ENCODE measurements at regions of chr1 and their contacts with region 1.

Region 1: DNA sequence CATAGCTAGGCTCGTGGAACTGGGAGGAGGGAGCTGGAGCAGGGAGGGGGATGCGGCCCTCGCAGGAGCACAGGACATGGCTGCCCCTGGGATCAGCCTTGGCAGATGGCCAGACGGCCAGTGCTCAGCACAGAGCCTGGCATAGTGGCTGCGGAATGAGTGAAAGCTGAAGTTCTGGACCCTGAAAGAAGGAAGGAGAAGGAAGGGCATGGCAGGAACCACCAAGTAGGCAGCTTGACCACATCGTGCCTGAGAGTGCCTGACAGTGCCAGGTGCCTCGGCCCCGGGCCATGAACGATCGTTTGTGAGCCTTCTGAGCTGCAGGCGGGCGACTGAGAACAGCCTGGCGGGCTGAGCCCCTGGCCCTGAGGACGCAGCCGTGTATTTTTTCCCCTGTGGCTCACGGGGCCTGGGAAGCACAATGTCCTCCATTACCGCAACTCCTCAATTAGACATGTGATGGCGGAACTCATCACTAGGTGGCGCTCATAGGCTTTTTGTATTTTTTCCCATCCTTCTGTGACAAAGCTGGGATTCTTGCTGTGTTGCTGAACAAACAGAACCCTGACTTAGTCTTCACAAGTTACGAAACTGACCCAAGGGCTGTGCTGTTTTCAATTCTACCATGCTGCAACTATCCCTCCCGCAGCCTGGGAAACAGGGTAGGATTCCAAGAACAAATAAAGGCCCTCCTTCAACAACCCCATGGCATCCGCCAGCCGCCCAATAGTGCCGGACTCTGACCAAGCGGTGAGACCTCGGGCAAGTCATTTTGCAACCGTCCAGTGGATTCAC is 29.9 kb upstream of the TMEM61 start:
- DNase-seq: peak; percentile 76
- H3K4me3 ChIP-seq: peak overlapping the region in 2 of 8 donors; percentile 15 to 50
- H3K27ac ChIP-seq: peak overlapping the region in 2 of 8 donors; percentile 36 to 47
- H3K4me1 ChIP-seq: peaks cover 0 to 34% (median 8%) of the 10 kb centered on the region in 6 donors
- H3K27me3 ChIP-seq: peaks cover 0 to 7% (median 0%) of the 10 kb centered on the region in 7 donors
- CTCF ChIP-seq: peak; percentile 45 to 86 (median 72)
- POLR2A ChIP-seq: no peak

Region 2: DNA sequence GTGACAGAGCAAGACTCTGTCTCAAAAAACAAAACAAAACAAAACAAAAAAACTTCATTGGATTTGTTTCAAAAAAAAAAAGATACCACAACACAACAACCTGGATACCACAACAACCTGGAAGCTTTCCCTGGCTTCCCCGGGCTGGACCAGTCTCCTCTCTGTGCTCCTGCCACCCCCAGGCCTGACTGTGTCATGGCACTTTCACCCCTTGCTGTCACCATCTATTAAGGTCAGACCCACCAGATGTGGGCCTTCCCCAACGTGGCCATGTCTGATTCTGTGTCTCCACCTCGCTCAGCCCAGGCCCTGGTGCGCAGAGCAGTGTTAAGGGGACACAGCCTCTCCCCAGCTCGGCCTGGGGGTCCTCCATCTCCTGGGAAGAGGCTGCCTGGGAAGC is 430.9 kb before region 1 on chr1:
- intact Hi-C with region 1: no loop called
- DNase-seq: no peak
- H3K4me3 ChIP-seq: no peak overlapping the region
- H3K27ac ChIP-seq: no peak overlapping the region
- H3K4me1 ChIP-seq: no peaks in the 10 kb centered on the region
- H3K27me3 ChIP-seq: peaks cover 0 to 6% (median 0%) of the 10 kb centered on the region in 7 donors
- CTCF ChIP-seq: no peak
- POLR2A ChIP-seq: no peak

Region 3: DNA sequence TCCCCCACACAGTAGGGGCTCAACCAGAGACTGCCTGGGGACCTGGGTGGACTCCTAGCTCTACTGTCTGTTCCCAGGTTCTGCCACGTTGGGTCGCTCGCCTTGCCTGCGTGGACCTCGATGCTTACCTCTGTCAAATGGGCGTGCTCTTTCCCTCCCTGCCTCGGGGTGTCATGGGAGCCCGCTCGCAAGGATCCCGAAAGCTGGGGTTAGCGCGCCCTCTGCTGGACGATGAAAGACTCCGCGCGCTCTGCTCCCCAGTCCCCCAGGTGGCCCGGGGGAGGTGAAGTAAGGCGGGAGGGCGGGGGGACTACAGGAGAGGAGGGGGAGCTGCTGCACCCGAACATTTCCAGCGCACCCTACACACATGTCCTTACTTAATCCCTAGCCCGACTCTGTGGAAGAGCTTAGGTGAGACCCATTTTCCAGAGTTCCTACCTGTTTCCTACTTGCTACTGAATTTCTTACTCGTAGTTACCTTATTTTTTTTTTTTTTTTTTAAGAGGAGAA is 45.8 kb after region 1 on chr1:
- intact Hi-C with region 1: loop called (anchors 5 kb)
- DNase-seq: peak; percentile 91
- H3K4me3 ChIP-seq: peak overlapping the region in 2 of 8 donors; percentile 1 to 46
- H3K27ac ChIP-seq: no peak overlapping the region
- H3K4me1 ChIP-seq: peaks cover 5 to 22% (median 14%) of the 10 kb centered on the region in 6 donors
- H3K27me3 ChIP-seq: peaks cover 0 to 63% (median 17%) of the 10 kb centered on the region in 7 donors
- CTCF ChIP-seq: peak; percentile 54 to 88 (median 80)
- POLR2A ChIP-seq: no peak